CD4-positive, alpha-beta memory T cell (primary cell): ENCODE measurements at regions of chr1 and their contacts with region 1.

Region 1: GRCh38 chr1:21489146-21489735 is 20.0 kb upstream of the ALPL start:
- DNase-seq: no peak
- H3K4me3 ChIP-seq: no peak overlapping the region
- H3K4me3 Mint-ChIP-seq: no peak overlapping the region
- H3K27ac ChIP-seq: no peak overlapping the region
- H3K27ac Mint-ChIP-seq: peak overlapping the region in 2 of 7 donors; percentile 30 to 87
- H3K4me1 ChIP-seq: peaks cover 5% of the 10 kb centered on the region
- H3K4me1 Mint-ChIP-seq: peaks cover 7 to 13% (median 8%) of the 10 kb centered on the region in 4 donors
- H3K27me3 ChIP-seq: no peaks in the 10 kb centered on the region
- H3K27me3 Mint-ChIP-seq: peaks cover 8 to 13% of the 10 kb centered on the region in 2 donors

Region 2: GRCh38 chr1:21434394-21434793 is 54.8 kb before region 1 on chr1:
- CTCF ChIA-PET with region 1: no interaction called
- POLR2A ChIA-PET with region 1: no interaction called
- intact Hi-C with region 1: loop called (anchors 10 kb)
- DNase-seq: no peak
- H3K4me3 ChIP-seq: no peak overlapping the region
- H3K4me3 Mint-ChIP-seq: no peak overlapping the region
- H3K27ac ChIP-seq: no peak overlapping the region
- H3K27ac Mint-ChIP-seq: no peak overlapping the region
- H3K4me1 ChIP-seq: no peaks in the 10 kb centered on the region
- H3K4me1 Mint-ChIP-seq: peaks cover 0 to 15% (median 4%) of the 10 kb centered on the region in 4 donors
- H3K27me3 ChIP-seq: no peaks in the 10 kb centered on the region
- H3K27me3 Mint-ChIP-seq: peaks cover 0 to 7% of the 10 kb centered on the region in 2 donors

Region 3: DNA sequence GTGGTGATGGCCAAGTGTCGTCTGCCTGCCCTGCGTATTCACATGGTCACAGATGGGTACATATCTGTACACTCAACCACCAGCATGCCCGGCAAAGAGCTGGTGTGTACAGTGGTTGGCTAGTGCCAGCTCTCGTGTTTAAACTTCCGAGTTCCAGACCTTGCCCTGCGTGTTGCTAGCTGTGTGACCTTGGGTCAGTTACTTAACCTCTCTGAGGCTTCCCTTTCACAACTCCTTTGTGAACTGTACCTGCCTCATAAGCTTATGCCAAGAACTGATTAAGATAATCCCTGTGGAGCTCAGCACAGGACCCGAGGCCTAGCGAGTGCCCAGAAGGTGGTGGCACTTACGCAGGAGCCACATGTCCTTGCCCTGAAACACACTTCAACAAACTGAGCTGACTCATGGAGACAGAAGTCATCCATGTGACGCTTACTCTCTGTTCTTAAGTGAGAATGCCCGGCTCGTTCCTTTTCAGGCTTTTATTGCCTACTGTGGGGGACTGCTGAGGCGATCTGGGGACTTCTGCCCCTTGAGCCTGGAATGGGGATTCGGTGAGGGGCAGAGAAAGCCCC is 75.4 kb after region 1 on chr1:
- CTCF ChIA-PET with region 1: no interaction called
- POLR2A ChIA-PET with region 1: no interaction called
- intact Hi-C with region 1: no loop called
- DNase-seq: no peak
- H3K4me3 ChIP-seq: no peak overlapping the region
- H3K4me3 Mint-ChIP-seq: no peak overlapping the region
- H3K27ac ChIP-seq: no peak overlapping the region
- H3K27ac Mint-ChIP-seq: no peak overlapping the region
- H3K4me1 ChIP-seq: no peaks in the 10 kb centered on the region
- H3K4me1 Mint-ChIP-seq: no peaks in the 10 kb centered on the region
- H3K27me3 ChIP-seq: no peaks in the 10 kb centered on the region
- H3K27me3 Mint-ChIP-seq: peaks cover 3 to 15% of the 10 kb centered on the region in 2 donors